ENCODE measurements at regions of chr3 and their contacts with region 1.

Region 1: DNA sequence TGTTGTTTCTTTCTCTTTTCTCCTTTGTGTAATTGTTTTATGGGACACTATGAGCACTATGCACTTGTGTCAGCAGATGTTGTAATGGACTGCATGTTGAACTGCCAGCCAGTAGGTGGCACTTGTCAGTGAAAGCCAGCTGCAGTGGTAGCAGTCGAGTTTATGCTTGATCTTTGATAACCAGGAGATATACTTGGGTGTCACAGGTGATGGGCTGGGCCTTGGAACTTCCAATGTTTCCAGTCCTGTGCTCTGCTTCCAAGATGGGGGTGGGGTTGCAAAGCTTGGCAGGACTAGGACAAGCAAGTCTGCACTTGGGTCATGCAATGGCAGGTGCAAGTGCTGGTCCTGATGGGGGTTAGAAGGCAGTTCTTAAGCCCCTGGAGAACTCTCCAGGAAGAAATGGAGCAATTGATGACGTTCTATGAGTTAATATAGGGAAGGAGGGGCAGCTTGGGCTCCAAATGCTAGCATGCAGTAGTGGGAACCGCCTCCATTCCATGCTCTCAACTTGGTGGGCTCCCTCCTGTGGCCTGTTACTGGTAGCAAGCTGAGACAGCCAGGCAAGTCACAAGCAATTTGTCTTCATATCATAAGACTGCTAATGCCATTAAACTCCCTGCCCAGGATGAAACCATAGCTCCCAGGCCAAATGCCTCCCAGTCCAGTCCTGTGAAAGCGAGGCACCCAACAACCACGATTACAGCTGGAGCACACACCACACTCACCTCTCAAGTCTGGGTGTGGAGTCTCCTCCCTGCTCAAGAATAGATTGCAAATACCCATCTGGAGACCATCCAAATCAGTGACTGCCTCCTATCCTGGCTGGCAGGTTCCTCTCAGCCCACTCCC is 287.2 kb downstream of the CGGBP1 start:
- DNase-seq: peak; percentile 58
- ATAC-seq: peak; percentile 90
- H3K4me3 Mint-ChIP-seq: no peak overlapping the region
- H3K27ac Mint-ChIP-seq: no peak overlapping the region
- H3K4me1 Mint-ChIP-seq: no peaks in the 10 kb centered on the region
- H3K27me3 Mint-ChIP-seq: peaks cover 3% of the 10 kb centered on the region

Region 2: DNA sequence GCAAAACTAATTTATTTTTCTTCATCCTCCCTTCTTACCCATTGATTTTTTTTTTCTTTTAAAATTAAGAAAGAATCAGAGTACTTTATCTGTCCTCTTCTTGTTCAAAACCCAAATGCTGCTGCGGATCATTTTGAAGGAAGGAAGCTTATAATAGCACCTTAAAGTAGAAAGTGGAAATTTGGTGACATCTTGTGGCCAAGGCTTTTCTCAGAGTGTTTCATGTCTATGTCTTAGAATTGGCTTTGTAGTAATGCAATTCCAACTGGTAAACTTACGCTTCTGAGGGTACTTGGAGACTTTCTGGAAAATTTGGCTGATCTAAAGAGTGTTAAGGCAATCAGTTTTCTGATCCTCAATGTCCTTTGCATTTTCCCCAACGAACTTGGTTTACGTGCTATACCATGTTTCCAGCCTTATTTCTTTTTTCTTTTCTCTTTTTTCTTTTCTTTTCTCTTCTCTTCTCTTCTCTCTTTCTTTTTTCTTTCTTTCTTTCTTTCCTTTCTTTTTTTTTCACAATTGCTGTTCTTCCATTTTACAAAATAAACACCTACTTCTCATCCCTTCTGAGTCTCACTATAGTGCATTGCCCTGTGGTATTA is 408.9 kb after region 1 on chr3:
- CTCF ChIA-PET with region 1: no interaction called
- POLR2A ChIA-PET with region 1: no interaction called
- intact Hi-C with region 1: loop called (anchors 2 kb)
- DNase-seq: peak; percentile 30
- ATAC-seq: peak; percentile 66
- H3K4me3 Mint-ChIP-seq: no peak overlapping the region
- H3K27ac Mint-ChIP-seq: no peak overlapping the region
- H3K4me1 Mint-ChIP-seq: no peaks in the 10 kb centered on the region
- H3K27me3 Mint-ChIP-seq: no peaks in the 10 kb centered on the region